Common myeloid progenitor, CD34-positive (primary cell): ENCODE measurements at regions of chrX and their contacts with region 1.

Region 1: DNA sequence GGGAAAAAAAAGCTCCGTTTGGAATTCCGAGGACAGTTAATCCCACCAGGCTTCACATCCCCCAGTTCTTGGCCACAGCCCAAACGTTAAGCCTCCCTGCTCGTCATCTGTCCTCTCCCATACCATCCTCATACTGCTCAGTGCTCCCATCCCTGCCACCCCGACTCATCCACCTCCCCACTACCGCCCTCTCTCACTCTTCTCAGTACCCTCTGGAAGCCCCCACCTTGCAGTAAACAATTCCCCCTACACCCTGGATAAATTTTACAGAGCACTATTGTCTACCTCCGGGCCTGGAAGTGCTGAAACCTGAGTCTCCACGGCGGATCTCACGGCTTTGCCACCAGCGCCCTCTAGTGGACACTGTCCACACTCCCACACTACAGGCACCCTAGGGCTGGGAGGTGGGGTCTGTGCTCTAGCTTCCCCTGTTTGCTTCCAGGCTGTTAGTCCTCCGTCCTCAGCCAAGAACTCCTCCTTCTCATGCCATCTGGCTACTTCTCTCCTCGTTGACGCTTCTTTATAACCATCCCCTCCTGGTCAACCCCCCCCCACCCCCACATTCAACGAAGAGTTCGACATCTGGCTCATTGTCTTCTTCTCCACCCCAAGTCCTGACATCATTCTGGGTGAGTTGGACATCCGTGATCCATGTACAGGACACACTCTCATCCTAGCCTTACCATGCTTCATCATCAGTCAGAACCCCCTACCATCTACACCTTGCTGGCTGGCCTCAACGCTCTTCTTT is 54.5 kb downstream of the RTL9 start:
- DNase-seq: peak; percentile 54 to 86 (median 79)
- H3K4me3 ChIP-seq: no peak overlapping the region
- H3K27ac ChIP-seq: no peak overlapping the region
- H3K4me1 ChIP-seq: peaks cover 0 to 2% (median 0%) of the 10 kb centered on the region in 4 experiments
- H3K27me3 ChIP-seq: peaks cover 0 to 3% (median 2%) of the 10 kb centered on the region in 5 experiments

Region 2: DNA sequence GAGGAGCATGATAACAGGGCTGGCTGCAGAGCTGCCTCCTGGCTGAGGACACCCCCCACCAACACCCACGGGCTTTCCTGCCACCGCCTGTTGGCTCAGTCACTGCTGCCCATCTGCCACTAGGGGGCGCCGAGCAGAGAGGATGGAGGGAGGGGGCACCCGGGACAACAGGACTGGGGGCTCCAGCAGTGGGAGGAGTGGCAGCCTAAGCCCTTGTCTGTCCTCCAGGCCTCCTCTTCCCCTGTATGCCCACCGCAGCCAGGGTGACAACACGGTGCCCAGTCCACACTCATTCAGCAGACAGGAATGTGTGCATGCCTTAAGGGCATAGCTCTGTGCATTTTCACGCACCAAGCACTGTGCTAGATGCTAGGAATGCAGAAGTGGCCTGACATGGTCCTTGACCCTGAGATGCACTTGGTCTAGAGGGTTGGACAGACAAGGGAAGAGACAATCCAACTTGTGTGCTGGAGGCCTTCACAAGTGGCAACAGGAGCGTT is 245.1 kb before region 1 on chrX:
- CTCF ChIA-PET with region 1: interaction called, 366 read pairs
- POLR2A ChIA-PET with region 1: no interaction called
- DNase-seq: peak in 2 of 3 donors; percentile 32 to 45
- H3K4me3 ChIP-seq: no peak overlapping the region
- H3K27ac ChIP-seq: no peak overlapping the region
- H3K4me1 ChIP-seq: no peaks in the 10 kb centered on the region
- H3K27me3 ChIP-seq: no peaks in the 10 kb centered on the region

Region 3: GRCh38 chrX:110992611-110993010 is 579.5 kb after region 1 on chrX:
- CTCF ChIA-PET with region 1: no interaction called
- POLR2A ChIA-PET with region 1: no interaction called
- DNase-seq: peak; percentile 22 to 56 (median 34)
- H3K4me3 ChIP-seq: no peak overlapping the region
- H3K27ac ChIP-seq: no peak overlapping the region
- H3K4me1 ChIP-seq: no peaks in the 10 kb centered on the region
- H3K27me3 ChIP-seq: peaks cover 0 to 15% (median 2%) of the 10 kb centered on the region in 5 experiments